Activated B cell treated with CpG ODN at 0.5 μM for 24 hours (primary cell): ENCODE measurements at regions of chr1 and their contacts with region 1.

Region 1: DNA sequence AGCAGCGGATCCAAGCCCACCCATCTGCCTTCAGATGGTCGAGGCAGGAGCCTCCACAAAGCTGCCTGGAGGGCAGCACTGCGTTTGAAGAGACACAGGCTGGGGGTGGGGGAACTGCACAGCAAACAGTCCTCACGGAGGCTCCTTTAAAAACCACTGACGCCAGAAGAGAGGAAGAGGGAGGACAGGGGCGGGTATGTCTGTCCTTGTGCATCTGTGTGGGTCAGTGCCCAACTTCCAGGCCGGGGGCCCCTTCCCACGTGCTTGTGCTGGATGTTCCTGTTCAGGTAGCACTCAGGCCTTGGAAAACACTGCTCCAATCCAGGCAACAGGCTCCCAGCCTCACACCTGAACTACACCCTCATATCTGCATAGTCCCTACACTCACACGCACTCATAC is 7.7 kb downstream of the AHDC1 start:
- DNase-seq: no peak
- ATAC-seq: no peak
- H3K4me3 Mint-ChIP-seq: no peak overlapping the region
- H3K27ac Mint-ChIP-seq: no peak overlapping the region
- H3K4me1 Mint-ChIP-seq: peaks cover 30% of the 10 kb centered on the region
- H3K27me3 Mint-ChIP-seq: no peaks in the 10 kb centered on the region
- CTCF ChIP-seq: no peak

Region 2: GRCh38 chr1:27423709-27424108 is 172.6 kb before region 1 on chr1:
- CTCF ChIA-PET with region 1: no interaction called
- POLR2A ChIA-PET with region 1: interaction called, 10 read pairs
- intact Hi-C with region 1: no loop called
- DNase-seq: no peak
- ATAC-seq: no peak
- H3K4me3 Mint-ChIP-seq: no peak overlapping the region
- H3K27ac Mint-ChIP-seq: no peak overlapping the region
- H3K4me1 Mint-ChIP-seq: peaks cover 67% of the 10 kb centered on the region
- H3K27me3 Mint-ChIP-seq: no peaks in the 10 kb centered on the region
- CTCF ChIP-seq: no peak

Region 3: GRCh38 chr1:27635396-27636142 is 39.3 kb after region 1 on chr1:
- CTCF ChIA-PET with region 1: no interaction called
- POLR2A ChIA-PET with region 1: no interaction called
- intact Hi-C with region 1: no loop called
- DNase-seq: no peak
- ATAC-seq: no peak
- H3K4me3 Mint-ChIP-seq: peak overlapping the region; percentile 62
- H3K27ac Mint-ChIP-seq: peak overlapping the region; percentile 96
- H3K4me1 Mint-ChIP-seq: peaks cover 79% of the 10 kb centered on the region
- H3K27me3 Mint-ChIP-seq: no peaks in the 10 kb centered on the region
- CTCF ChIP-seq: no peak

Region 4: DNA sequence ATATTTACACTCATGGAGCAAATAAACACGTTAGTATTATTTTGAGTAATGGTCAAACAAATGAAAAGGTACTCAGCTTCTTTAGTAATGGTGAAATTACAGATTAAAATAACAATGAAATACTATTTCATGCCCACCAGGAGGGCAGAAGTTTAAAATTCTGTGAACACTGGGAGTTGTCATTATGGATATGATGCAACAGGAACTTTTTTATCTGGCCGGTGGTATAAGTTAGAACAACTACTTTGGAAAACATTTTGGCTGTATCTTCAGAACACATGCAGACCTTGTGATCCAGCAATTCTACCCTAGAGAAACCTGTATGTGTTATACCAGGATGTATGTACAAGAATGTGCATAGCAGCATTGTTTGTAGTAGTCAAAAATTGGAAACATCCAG is 211.1 kb after region 1 on chr1:
- CTCF ChIA-PET with region 1: no interaction called
- POLR2A ChIA-PET with region 1: no interaction called
- intact Hi-C with region 1: no loop called
- DNase-seq: no peak
- ATAC-seq: no peak
- H3K4me3 Mint-ChIP-seq: no peak overlapping the region
- H3K27ac Mint-ChIP-seq: no peak overlapping the region
- H3K4me1 Mint-ChIP-seq: no peaks in the 10 kb centered on the region
- H3K27me3 Mint-ChIP-seq: no peaks in the 10 kb centered on the region
- CTCF ChIP-seq: no peak